Activated CD4-positive, alpha-beta T cell treated with anti-CD3 and anti-CD28 coated beads for 36 hours (primary cell): ENCODE measurements at regions of chr22 and their contacts with region 1.

Region 1: DNA sequence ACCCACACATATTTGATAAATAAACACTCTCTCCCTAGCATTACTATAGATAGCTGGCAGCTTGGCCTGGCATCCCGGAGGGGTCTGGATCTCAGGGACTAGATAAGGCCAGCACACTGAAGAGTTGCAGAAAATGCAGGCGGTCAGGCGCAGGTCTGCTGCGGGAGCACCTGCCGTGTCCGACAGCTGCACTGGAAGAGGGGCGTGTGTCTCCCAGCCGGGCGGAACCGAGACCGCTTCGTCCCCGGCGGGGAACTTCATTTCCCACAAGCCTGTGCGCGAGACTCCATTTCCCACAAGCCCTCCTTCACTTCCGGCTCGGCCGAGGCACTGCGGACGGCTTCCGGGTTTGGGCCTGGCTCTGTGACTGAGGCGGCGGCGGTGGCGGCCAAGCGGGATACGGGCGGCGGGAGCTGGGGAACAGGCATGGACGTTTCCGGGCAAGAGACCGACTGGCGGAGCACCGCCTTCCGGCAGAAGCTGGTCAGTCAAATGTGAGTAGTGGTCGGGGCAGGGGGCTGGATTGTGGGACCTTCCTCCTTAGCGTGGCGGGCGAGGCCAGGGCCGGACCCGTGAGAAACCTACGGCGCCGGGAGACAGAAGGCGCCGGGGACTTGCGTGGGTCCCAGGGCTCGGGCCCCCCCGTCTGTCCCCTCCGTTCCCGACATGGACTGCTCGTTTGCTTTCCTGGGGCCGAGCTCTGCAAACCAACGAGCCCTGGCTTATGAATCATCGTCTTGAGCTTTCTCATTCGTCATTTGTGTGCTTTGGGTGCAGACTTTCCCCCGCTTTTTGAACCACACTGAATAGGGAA is at the start of gene MED15:
- DNase-seq: peak; percentile 95
- ATAC-seq: peak; percentile 85
- H3K4me3 Mint-ChIP-seq: peak within 1 kb of the TSS; percentile 85
- H3K27ac Mint-ChIP-seq: peak within 1 kb of the TSS; percentile 96
- H3K4me1 Mint-ChIP-seq: peaks cover 50% of the 10 kb centered on the region
- H3K27me3 Mint-ChIP-seq: no peaks in the 10 kb centered on the region
- total RNA-seq, gene MED15: 84.4 to 107 TPM

Region 2: DNA sequence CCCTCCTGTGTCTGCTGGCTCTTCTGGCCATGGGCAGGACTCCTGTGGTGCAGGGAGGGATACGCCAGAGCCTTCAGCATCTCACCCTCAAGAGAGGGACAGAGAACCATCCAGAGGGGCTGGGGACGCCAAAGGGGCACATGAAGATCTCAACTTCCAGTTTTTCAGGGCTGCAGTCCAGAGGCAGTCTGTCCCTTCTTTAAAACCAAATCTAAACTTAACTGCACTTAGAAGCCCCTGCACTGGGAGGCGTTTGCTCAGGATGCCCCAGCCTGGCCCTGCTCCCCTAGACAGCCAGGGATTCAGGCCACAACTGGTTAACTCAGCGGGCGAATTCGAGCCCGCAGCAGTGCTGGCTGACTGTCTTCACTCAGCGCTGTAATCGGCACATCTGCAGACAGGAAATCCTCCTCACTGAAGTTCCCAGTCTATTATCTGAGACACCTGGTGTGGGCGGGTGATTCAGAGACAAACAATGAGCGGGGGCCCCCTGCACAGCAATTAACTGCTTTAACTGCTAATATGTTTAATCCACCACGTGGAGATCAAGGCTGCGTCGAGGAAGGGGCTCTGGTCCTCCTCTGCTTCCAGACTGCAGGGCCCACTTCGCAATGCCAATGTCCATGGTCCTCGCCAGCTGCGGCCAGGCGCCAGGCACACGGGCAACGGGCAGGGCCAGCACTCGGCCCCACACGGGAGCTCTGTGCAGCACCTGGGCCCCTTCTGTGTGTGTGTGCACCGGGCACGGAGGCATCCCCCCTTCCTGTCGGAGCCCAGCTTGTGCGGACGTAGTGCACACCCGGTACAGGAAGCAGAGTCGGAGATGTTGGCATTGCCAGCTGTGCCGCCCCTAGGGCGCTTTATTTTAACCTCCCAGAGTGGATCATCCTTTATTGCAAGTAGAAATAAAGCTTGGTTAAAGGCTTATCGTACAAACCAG is 615.9 kb before region 1 on chr22:
- CTCF ChIA-PET with region 1: no interaction called
- POLR2A ChIA-PET with region 1: no interaction called
- intact Hi-C with region 1: loop called in 1 of 2 experiments (anchors 5 kb)
- DNase-seq: peak; percentile 92
- ATAC-seq: peak; percentile 75
- H3K4me3 Mint-ChIP-seq: peak overlapping the region; percentile 72
- H3K27ac Mint-ChIP-seq: peak overlapping the region; percentile 95
- H3K4me1 Mint-ChIP-seq: peaks cover 86% of the 10 kb centered on the region
- H3K27me3 Mint-ChIP-seq: no peaks in the 10 kb centered on the region

Region 3: GRCh38 chr22:20393909-20394691 is 113.4 kb before region 1 on chr22 and contains the start of gene ZNF74:
- CTCF ChIA-PET with region 1: no interaction called
- POLR2A ChIA-PET with region 1: interaction called, 5 read pairs
- intact Hi-C with region 1: loop called in 1 of 2 experiments (anchors 1 kb)
- DNase-seq: peak; percentile 90
- ATAC-seq: peak; percentile 95
- H3K4me3 Mint-ChIP-seq: peak within 1 kb of the TSS; percentile 77
- H3K27ac Mint-ChIP-seq: peak within 1 kb of the TSS; percentile 86
- H3K4me1 Mint-ChIP-seq: peaks cover 24% of the 10 kb centered on the region
- H3K27me3 Mint-ChIP-seq: no peaks in the 10 kb centered on the region
- total RNA-seq, gene ZNF74: 6.5 to 10.3 TPM

Region 4: DNA sequence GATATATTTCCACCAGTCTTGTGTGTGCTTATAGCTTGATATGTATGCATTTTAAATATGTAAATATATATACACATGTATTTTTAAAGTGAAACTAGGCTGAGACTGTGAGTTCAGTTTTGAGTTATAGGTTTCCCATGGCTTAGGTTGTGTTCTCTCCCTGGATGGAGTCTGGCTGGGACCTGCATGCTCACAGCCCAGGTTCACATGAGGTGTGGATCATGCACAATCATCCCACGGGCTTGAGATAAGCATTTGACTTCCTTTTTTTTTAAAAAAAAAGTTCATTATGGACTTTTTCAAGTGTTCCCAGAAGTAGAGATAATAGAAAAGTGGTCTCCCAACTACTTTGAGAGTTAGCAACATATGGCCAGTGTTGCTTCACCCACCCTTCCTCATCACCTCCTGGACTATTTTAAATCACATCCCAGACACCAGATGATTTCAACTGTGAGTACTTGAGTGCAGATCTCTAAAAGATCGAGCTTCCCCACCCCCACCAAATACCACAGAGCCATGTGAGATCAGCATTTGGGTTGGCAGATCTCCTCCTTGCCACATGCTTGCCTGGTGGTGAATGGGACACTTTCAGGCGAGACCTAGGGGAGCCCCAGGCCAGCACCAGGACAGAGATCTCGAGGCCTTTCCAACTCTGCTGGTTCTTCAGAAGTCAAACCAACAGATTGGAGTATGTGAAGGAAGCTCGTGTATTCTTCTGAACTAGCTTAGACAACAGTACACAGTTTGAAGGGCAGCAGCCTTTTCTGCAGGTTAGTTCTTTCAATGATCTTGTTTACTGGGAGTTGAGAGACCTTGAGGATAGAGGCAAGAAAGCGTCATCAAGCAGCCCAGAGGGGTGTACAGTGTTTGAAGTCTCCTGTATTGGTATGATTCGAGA is 15.9 kb after region 1 on chr22:
- CTCF ChIA-PET with region 1: interaction called, 6 read pairs
- POLR2A ChIA-PET with region 1: interaction called, 8 read pairs
- intact Hi-C with region 1: loop called (anchors 1 to 2 kb)
- DNase-seq: peak; percentile 46
- ATAC-seq: peak; percentile 43
- H3K4me3 Mint-ChIP-seq: no peak overlapping the region
- H3K27ac Mint-ChIP-seq: peak overlapping the region; percentile 52
- H3K4me1 Mint-ChIP-seq: peaks cover 76% of the 10 kb centered on the region
- H3K27me3 Mint-ChIP-seq: no peaks in the 10 kb centered on the region

Region 5: GRCh38 chr22:20568989-20569769 is 61.7 kb after region 1 on chr22:
- CTCF ChIA-PET with region 1: interaction called, 30 read pairs
- POLR2A ChIA-PET with region 1: interaction called, 3 read pairs
- intact Hi-C with region 1: loop called in 1 of 2 experiments (anchors 5 kb)
- DNase-seq: peak; percentile 79
- ATAC-seq: peak; percentile 62
- H3K4me3 Mint-ChIP-seq: no peak overlapping the region
- H3K27ac Mint-ChIP-seq: peak overlapping the region; percentile 69
- H3K4me1 Mint-ChIP-seq: peaks cover 75% of the 10 kb centered on the region
- H3K27me3 Mint-ChIP-seq: no peaks in the 10 kb centered on the region

Region 6: GRCh38 chr22:21001560-21002325 is 494.3 kb after region 1 on chr22 and contains the start of gene THAP7:
- CTCF ChIA-PET with region 1: no interaction called
- POLR2A ChIA-PET with region 1: no interaction called
- intact Hi-C with region 1: loop called in 1 of 2 experiments (anchors 5 kb)
- DNase-seq: peak; percentile 99
- ATAC-seq: peak; percentile 92
- H3K4me3 Mint-ChIP-seq: peak within 1 kb of the TSS; percentile 92
- H3K27ac Mint-ChIP-seq: peak within 1 kb of the TSS; percentile 96
- H3K4me1 Mint-ChIP-seq: peaks cover 19% of the 10 kb centered on the region
- H3K27me3 Mint-ChIP-seq: no peaks in the 10 kb centered on the region
- total RNA-seq, gene THAP7: 25.1 to 27.2 TPM